ENCODE measurements at regions of chr4 and their contacts with region 1.

Region 1: DNA sequence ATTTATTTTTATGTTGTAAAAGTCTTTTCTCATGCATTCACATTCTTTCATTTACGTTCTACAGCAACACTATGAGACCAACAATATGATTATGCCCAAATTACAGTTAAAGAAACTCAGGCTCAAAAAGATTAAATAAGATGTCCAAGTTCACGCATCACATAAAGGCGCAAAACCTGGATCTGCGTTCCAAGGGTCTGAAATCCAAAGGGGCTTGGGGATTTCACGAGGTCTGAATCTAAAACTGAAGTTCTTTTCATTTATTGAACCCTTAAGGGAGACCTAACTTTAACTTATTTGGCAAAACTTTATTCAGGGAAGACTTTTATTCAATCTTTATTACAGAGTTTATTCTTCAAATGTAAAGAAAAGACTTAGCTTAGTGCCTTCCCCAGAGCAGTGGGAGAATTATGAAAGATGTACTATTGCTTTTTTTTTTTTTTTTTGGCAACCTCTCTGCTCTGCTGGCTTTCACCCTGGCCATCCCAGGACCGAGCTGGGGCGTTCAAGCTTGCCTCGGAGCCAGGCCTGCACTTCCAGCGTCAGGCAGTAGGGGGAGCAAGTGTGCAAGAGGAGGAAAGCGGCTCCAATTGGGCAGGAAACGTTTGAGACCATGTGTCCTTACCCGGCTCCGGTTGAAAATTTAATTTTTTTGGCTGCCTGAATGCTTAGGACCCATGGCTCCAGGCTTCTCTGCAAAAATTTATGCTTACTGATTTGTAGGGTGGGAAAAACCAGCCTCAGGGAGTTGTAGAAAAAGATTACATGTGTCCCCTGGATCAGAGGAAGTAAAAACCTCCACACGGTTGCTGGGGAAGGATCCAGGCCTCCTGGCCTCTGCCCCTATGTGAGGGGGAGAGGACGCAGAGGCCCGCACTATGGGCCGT is 344.3 kb upstream of the KLF3 start:
- DNase-seq: peak; percentile 89 to 95
- H3K4me3 ChIP-seq: no peak overlapping the region
- H3K27ac ChIP-seq: peak overlapping the region; percentile 57 to 90 (median 70)
- H3K4me1 ChIP-seq: peaks cover 19 to 30% of the 10 kb centered on the region in 2 donors
- H3K27me3 ChIP-seq: no peaks in the 10 kb centered on the region
- CTCF ChIP-seq: peak; percentile 87 to 99 (median 96)
- POLR2A ChIP-seq: no peak

Region 2: DNA sequence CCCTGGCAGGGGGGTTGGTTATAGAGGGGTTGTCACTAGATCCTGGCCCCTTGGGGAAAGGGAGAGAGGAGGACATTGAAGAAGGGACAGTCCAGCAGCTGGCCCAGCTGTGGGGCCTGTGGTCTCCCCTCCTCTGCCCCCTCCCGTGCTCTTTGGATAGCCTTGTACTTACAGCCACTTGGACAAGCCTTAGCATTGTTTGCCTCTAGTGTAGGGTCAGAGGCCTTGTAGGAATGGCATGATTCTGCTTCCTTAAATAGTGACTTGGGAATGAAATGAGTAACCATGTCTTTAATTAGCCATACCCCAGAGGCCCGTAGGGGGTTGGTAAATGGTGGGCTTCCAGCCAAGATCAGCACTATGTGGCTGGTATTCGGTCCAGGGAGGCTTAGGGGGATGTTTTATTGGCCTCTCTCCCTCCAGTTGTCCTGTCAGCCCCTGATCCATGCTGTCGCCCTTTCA is 129.0 kb before region 1 on chr4:
- intact Hi-C with region 1: loop called (anchors 10 kb)
- DNase-seq: no peak
- H3K4me3 ChIP-seq: no peak overlapping the region
- H3K27ac ChIP-seq: peak overlapping the region in 1 of 3 donors; percentile 46
- H3K4me1 ChIP-seq: peaks cover 19 to 44% of the 10 kb centered on the region in 2 donors
- H3K27me3 ChIP-seq: no peaks in the 10 kb centered on the region
- CTCF ChIP-seq: no peak
- POLR2A ChIP-seq: no peak

Region 3: DNA sequence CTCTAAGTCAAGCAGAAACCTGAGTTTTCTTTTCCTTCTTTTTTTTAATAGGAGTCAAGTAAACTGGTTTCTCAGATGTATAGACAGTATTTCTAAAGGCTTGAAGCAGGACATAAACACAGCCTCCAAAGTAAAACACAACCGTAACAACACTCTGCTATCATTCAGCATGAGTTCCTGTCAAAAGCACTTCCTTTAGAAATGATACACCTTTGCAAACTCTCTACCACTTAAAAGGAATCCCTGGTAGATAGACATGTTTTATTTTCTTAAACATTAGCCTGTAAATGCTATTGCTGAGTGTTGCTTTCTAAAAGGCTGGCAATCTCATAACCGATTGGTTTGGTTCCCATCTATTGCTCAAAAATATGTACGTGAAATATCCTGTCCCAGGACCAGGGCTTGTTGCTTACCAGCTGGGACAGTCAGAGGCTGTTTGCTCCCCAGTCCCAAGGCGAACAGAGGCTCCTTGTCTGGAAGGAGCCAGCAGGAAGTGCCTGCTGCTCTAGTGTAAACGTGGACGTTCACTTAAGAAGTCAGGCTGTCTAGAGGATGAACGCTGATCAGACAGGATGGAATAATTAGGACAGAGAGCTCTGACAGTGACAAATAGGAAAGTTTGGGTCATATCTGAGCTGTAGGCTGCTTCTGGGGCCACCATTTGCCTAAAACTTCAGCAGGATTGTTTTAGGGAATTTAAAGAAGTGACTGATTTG is 170.4 kb after region 1 on chr4:
- intact Hi-C with region 1: loop called (anchors 10 kb)
- DNase-seq: peak; percentile 1 to 4
- H3K4me3 ChIP-seq: no peak overlapping the region
- H3K27ac ChIP-seq: no peak overlapping the region
- H3K4me1 ChIP-seq: peaks cover 0 to 20% of the 10 kb centered on the region in 2 donors
- H3K27me3 ChIP-seq: no peaks in the 10 kb centered on the region
- CTCF ChIP-seq: no peak
- POLR2A ChIP-seq: no peak

Region 4: DNA sequence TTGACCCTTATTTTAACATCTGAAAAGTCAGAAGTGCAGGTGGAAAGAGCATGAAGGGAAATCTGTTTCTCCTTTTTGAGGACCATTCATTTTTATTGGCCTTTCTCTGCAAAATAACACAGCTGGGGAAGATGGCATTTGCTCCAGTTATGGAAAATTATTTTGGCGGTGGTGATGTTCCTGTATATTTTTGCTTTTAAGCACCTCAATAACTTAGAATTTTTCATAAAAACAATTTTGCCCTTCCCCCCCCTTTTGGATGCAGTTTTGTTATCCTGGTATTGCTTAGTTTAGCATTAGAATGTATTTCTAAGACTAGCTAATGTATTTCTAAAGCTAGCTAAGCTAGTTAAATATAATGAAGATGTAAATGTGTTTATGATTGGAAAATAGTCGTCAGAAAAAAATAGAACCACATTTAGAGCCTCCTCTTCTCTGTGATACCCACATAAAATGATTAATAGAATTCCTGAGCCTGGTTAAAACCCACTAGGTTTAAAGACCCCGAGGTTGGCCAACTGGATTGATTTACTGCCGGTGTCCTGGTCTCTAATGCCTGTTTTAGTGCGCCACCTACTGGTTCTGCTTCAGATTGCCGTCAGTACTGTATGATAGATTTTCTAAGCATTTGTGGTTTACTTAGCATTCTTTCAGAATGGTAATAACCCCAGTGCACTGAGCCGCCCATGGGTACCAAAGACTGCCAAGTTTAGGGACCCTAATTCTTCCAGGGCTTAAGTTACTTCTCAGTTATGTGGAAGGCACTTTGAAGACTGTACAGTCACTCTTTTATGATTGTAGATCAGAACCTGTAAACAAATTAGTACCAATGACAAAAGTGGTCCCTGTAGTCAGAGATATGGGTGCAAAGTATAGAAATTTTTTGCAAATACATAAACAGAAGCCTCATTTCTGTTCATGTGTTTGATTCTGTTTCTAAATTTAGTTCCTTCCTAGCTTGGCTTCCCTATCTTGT is 355.7 kb after region 1 on chr4:
- intact Hi-C with region 1: loop called (anchors 5 kb)
- DNase-seq: peak; percentile 84 to 86
- H3K4me3 ChIP-seq: no peak overlapping the region
- H3K27ac ChIP-seq: peak overlapping the region; percentile 73 to 97 (median 91)
- H3K4me1 ChIP-seq: peaks cover 61 to 70% of the 10 kb centered on the region in 2 donors
- H3K27me3 ChIP-seq: no peaks in the 10 kb centered on the region
- CTCF ChIP-seq: peak; percentile 73 to 90 (median 84)
- POLR2A ChIP-seq: no peak

Measured in thyroid gland (tissue), 4 donors.